Tibial artery (tissue), 4 donors: ENCODE measurements at regions of chr3 and their contacts with region 1.

Region 1: DNA sequence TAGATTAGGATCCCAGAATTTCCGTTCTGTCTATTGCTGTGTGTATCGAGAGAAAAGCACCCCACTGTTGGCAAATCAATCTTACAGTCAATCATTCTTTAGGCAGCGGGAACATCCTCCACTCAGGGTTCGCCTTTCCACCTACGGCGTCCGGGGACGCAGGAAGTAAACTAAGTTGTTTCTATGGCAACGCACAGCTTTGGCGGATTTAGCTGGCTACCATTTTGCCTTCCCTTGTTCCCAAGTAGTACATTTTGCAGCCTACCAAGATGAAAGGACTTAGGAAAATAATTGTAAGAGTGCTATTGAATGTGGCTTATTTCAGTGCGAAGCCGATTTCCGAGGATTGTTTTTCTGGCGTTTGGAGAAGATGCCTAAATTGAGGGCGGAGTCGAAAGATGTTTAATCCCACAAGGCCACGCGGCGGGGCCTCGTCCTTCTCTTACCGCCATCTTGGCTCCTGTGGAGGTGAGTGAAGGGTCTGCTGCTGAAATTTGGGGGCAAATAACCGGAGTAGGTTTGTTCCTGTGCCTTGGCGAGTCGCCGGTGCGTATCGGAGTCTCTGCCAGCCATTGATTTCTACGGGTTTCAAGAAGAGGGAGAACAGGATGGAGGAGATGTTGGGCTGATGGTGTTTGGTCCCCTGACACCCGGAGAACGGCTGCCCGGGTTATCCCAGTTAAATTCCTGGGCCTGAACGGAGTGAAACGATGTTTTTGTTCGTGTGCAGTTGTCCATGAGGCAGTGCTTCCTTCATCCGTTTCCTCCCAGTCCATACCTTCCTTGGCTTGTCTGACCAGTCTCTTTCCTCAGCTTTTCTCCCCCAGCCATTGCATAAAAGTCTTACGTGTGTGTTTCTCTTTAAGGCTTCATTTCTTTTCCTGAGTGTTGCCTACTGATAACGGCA is at the start of gene RPL35A:
- DNase-seq: peak; percentile 84 to 90
- H3K4me3 ChIP-seq: peak within 1 kb of the TSS; percentile 57 to 64
- H3K27ac ChIP-seq: peak within 1 kb of the TSS; percentile 74 to 84
- H3K4me1 ChIP-seq: peaks cover 0 to 42% (median 33%) of the 10 kb centered on the region in 4 donors
- H3K27me3 ChIP-seq: no peaks in the 10 kb centered on the region
- CTCF ChIP-seq: no peak

Region 2: DNA sequence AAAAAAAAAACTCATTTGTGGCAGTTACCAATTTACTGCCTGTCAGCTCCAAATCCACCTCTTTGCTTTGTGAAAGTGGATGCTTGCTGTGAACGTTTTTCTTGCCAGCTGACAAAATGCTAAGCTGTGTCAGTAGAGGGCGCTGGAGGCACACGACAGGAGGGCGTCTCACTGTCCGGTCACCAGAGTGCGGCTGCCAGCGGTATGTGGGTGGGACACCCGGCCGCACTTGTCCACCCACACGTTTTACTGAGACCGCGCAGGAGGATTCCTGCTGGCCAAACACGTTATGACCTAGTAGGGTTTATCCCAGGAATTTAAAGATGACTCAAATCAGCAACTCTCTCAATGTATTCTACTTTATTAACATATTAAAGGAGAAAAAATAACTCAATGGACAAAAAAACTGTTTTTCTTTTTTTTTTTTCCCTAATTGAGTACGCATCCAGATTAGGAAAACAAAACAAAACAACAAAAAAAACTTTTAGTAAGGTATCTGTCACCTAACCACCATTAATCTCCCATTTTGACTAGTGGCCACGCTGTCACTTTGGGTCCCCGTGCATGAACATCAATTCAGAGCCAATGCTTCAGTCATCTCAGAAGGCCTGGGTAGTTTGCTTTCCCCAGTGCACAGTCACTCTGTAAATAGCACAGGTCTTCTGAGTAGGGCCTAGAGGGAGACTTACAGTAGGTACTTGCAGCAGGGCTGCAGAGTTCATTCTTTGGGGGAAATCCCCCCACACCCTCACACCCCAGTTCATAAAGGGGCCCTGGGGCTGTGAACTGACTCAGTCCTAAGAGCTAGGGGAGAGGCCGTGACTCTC is 43.8 kb before region 1 on chr3:
- intact Hi-C with region 1: loop called (anchors 5 kb)
- DNase-seq: peak; percentile 89 to 91
- H3K4me3 ChIP-seq: no peak overlapping the region
- H3K27ac ChIP-seq: peak overlapping the region in 1 of 2 donors; percentile 17
- H3K4me1 ChIP-seq: peaks cover 0 to 13% (median 3%) of the 10 kb centered on the region in 4 donors
- H3K27me3 ChIP-seq: no peaks in the 10 kb centered on the region
- CTCF ChIP-seq: peak; percentile 89 to 90

Region 3: DNA sequence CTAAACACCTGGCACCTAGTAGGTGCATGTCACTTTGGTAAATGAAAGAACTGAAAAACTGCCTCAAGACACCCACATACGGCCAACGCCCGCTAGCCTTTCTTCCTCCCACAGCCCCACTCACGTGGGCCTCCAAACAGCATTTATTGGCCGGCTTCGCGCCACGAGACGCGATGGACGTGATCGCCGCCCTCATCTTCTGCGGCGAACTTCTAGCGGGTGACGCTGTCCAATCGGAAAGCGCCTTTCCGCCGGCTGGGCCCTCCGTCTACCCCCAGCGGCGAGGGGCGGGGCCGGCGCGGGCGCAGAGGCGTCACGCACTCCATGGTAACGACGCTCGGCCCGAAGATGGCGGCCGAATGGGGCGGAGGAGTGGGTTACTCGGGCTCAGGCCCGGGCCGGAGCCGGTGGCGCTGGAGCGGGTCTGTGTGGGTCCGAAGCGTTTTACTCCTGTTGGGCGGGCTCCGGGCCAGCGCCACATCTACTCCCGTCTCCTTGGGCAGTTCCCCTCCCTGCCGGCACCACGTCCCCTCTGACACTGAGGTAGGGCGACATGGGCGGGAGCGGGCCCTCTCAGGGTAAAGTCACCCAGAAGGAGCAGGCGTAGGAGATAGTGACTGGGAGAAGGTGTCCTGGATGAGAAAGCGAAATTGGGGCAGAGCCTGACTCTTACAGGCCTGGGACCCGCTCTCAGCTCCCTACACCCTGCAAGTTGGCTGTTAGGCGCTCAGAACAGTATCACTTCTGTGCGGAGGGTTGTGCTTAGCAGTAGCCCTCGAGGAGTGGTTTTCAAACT is 10.1 kb after region 1 on chr3 and contains the start of gene LMLN:
- intact Hi-C with region 1: loop called (anchors 1 kb)
- DNase-seq: peak; percentile 95 to 97
- H3K4me3 ChIP-seq: peak within 1 kb of the TSS; percentile 70 to 90
- H3K27ac ChIP-seq: peak within 1 kb of the TSS; percentile 66 to 73
- H3K4me1 ChIP-seq: peaks cover 0 to 20% (median 13%) of the 10 kb centered on the region in 4 donors
- H3K27me3 ChIP-seq: no peaks in the 10 kb centered on the region
- CTCF ChIP-seq: no peak